Activated CD4-positive, alpha-beta T cell treated with anti-CD3 and anti-CD28 coated beads for 36 hours (primary cell): ENCODE measurements at regions of chr2 and their contacts with region 1.

Region 1: DNA sequence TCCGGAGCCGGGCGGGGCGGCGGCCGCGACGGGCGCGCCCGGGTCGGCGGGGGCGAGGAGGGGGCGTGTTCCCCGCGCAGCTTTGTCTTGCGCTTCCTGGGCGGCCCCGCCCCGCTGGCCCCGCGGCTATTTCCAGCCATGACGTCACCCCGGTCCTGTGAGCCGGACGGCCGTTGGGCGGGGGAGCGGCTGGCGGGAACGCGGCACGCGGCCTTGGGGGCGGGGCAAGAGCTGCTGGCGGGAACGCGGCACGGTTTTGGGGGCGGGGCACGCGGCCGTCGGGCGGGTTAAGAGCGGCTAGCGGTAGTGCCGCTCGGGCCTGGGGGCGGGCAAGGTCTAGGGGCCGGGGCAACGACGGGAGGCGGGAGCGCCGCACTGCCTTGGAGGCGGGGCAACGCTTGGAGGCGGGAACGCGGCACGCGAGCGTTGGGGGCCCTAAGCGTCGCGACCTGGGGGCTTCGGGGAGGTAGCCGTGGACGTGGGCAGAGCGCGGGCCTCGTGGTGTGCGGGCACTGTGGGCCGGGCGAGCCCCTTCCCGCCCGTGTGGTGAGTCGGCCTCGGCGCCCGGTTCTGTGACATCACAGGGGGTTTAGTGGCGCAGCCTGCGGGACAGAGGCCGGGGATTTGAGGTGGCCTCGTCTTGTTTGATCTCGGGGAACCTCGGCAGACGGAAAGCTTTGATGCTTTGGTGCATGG is 704 bp downstream of the KLF11 start:
- DNase-seq: peak; percentile 95
- ATAC-seq: peak; percentile 81
- H3K4me3 Mint-ChIP-seq: peak overlapping the region; percentile 66
- H3K27ac Mint-ChIP-seq: peak overlapping the region; percentile 78
- H3K4me1 Mint-ChIP-seq: peaks cover 12% of the 10 kb centered on the region
- H3K27me3 Mint-ChIP-seq: peaks cover 3% of the 10 kb centered on the region

Region 2: DNA sequence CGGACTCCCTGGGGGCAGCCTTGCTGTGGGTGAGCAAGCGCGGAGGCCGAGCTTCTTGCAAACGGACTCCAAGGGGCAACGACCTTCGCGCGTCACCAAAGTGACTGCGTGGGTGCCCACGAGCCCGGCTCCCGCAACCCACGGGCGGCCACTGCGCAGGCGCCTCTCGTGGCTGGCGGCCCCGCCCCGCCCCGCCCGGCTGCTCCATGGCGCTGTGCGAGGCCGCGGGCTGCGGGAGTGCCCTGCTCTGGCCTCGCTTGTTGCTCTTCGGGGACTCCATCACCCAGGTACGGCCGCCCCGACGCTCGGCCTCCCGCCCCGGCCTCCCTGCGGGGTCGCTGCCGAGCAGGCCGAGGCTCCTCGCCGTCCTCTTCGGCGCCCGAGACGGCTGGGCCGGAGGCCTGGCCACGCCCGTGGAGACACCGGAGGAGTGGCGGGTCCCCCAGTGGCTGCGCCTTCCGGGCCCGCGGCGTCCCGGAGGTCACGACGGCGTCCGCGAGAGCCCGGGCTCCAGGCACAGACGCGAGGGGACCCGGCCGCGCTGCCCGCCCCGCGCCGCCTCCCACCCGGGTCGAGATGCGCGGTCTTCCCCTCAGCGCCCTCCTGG is 569.6 kb before region 1 on chr2 and contains the start of gene IAH1:
- CTCF ChIA-PET with region 1: no interaction called
- POLR2A ChIA-PET with region 1: no interaction called
- intact Hi-C with region 1: loop called in 1 of 2 experiments (anchors 2 kb)
- DNase-seq: peak; percentile 81
- ATAC-seq: peak; percentile 81
- H3K4me3 Mint-ChIP-seq: peak within 1 kb of the TSS; percentile 79
- H3K27ac Mint-ChIP-seq: peak within 1 kb of the TSS; percentile 75
- H3K4me1 Mint-ChIP-seq: peaks cover 42% of the 10 kb centered on the region
- H3K27me3 Mint-ChIP-seq: no peaks in the 10 kb centered on the region
- total RNA-seq, gene IAH1: 53.7 to 63.7 TPM

Region 3: GRCh38 chr2:9813312-9814133 is 230.5 kb before region 1 on chr2:
- CTCF ChIA-PET with region 1: interaction called, 71 read pairs
- POLR2A ChIA-PET with region 1: interaction called, 7 read pairs
- intact Hi-C with region 1: loop called (anchors 1 kb)
- DNase-seq: peak; percentile 84
- ATAC-seq: peak; percentile 90
- H3K4me3 Mint-ChIP-seq: no peak overlapping the region
- H3K27ac Mint-ChIP-seq: no peak overlapping the region
- H3K4me1 Mint-ChIP-seq: peaks cover 9% of the 10 kb centered on the region
- H3K27me3 Mint-ChIP-seq: peaks cover 3% of the 10 kb centered on the region

Region 4: GRCh38 chr2:9984217-9984739 is 59.8 kb before region 1 on chr2:
- CTCF ChIA-PET with region 1: interaction called, 51 read pairs
- POLR2A ChIA-PET with region 1: interaction called, 3 read pairs
- intact Hi-C with region 1: loop called (anchors 1 to 2 kb)
- DNase-seq: peak; percentile 51
- ATAC-seq: peak; percentile 80
- H3K4me3 Mint-ChIP-seq: no peak overlapping the region
- H3K27ac Mint-ChIP-seq: no peak overlapping the region
- H3K4me1 Mint-ChIP-seq: peaks cover 16% of the 10 kb centered on the region
- H3K27me3 Mint-ChIP-seq: peaks cover 7% of the 10 kb centered on the region

Region 5: GRCh38 chr2:10072656-10073480 is 28.8 kb after region 1 on chr2:
- CTCF ChIA-PET with region 1: interaction called, 31 read pairs
- POLR2A ChIA-PET with region 1: no interaction called
- intact Hi-C with region 1: no loop called
- DNase-seq: peak; percentile 86
- ATAC-seq: peak; percentile 97
- H3K4me3 Mint-ChIP-seq: no peak overlapping the region
- H3K27ac Mint-ChIP-seq: no peak overlapping the region
- H3K4me1 Mint-ChIP-seq: no peaks in the 10 kb centered on the region
- H3K27me3 Mint-ChIP-seq: peaks cover 38% of the 10 kb centered on the region